ENCODE measurements at regions of chr11 and their contacts with region 1.

Region 1: DNA sequence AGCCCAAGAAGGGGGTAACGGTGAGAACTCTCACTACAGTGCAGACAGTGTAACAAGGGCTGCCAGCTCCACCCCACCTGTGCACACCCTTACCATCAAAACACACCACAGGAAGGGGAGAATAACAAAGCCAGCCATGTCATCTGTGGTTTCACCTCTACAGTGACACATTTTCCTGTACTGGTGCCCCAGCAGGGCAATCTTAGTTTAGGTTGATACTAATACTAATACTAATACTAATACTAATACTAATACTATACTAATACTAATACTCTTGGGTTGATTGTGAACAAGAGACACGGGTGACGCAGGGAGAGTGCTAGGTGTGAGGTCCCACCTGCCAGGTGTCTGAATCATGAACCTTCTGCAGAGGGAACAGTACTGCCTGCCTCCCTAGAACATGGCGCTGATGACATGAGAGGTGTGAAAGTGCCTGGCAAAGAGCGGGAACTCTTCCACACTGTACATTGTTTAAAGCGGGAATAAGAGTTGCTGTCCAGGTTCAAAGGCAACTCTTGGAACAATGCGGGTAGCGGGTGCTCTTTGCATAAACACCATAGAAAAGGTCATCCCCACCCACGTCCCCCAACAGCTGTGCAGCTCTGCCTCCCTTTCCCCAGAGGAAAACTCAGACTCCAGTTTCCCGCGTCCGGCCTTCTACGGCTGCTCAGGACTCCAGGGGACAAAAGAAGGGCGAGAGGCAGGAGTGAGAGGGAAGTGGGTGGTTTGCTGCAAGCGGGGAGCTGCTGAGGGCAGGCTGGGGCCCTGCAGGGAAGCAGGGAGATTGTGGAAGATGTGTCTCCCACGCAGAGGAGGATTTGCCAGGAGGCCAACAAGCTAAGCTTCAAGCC is 25.0 kb upstream of the TMPRSS4 start:
- DNase-seq: peak; percentile 86 to 91 (median 89)
- H3K4me3 ChIP-seq: peak overlapping the region in 1 of 2 donors; percentile 33
- H3K4me3 Mint-ChIP-seq: peak overlapping the region in 7 of 8 donors; percentile 69 to 93 (median 80)
- H3K27ac ChIP-seq: peak overlapping the region; percentile 57
- H3K27ac Mint-ChIP-seq: peak overlapping the region; percentile 95 to 100 (median 99)
- H3K4me1 ChIP-seq: peaks cover 67% of the 10 kb centered on the region
- H3K4me1 Mint-ChIP-seq: peaks cover 45 to 68% (median 59%) of the 10 kb centered on the region in 4 donors
- H3K27me3 ChIP-seq: no peaks in the 10 kb centered on the region
- H3K27me3 Mint-ChIP-seq: peaks cover 0 to 2% of the 10 kb centered on the region in 2 donors

Region 2: GRCh38 chr11:117807482-117808327 is 244.1 kb before region 1 on chr11:
- CTCF ChIA-PET with region 1: interaction called, 127 read pairs
- POLR2A ChIA-PET with region 1: interaction called, 14 read pairs
- intact Hi-C with region 1: loop called (anchors 1 kb)
- DNase-seq: peak; percentile 58 to 70 (median 62)
- H3K4me3 ChIP-seq: no peak overlapping the region
- H3K4me3 Mint-ChIP-seq: no peak overlapping the region
- H3K27ac ChIP-seq: no peak overlapping the region
- H3K27ac Mint-ChIP-seq: peak overlapping the region in 1 of 7 donors; percentile 45
- H3K4me1 ChIP-seq: peaks cover 10% of the 10 kb centered on the region
- H3K4me1 Mint-ChIP-seq: peaks cover 7 to 17% (median 10%) of the 10 kb centered on the region in 4 donors
- H3K27me3 ChIP-seq: no peaks in the 10 kb centered on the region
- H3K27me3 Mint-ChIP-seq: peaks cover 0 to 3% of the 10 kb centered on the region in 2 donors

Region 3: DNA sequence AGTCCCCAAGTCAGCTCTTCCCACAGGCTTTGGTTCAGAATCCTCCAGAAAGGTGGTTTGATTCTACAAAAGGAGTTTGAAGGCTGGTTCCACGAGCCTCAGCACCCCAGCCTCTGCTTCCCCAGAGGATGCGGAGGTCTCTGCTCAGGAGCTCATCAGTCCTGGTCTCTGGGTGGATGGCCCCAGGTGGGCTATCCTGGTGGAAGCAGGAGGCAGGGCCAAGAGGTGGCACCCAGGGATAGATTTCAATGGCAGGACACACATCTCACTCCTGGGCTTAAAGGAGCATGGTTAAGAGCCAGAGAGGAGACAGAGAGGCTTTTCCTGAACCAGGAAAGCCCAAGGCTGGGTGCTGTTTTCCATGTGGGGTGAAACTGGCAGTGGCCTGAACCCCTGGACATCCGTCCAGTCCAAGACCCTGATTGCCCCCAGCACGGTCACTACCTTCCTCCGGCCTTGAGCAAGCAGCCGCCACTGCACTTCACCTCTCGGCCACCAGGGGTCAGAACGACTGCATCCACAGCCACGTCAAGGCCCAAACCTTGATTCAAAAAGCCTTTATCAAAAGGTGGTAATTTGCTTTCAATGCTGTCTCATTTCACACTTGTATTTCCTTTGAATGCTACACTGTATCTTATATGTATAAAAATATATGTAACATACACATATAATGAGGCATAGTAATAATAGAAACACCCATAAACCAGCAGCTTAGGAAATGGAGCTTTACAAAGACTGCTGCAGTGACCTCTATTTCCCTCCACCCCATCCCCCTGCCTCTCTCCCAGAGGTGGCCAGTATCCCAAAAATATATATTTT is 208.0 kb before region 1 on chr11:
- CTCF ChIA-PET with region 1: interaction called, 286 read pairs
- POLR2A ChIA-PET with region 1: interaction called, 23 read pairs
- intact Hi-C with region 1: loop called (anchors 1 kb)
- DNase-seq: peak; percentile 72 to 79 (median 76)
- H3K4me3 ChIP-seq: no peak overlapping the region
- H3K4me3 Mint-ChIP-seq: no peak overlapping the region
- H3K27ac ChIP-seq: no peak overlapping the region
- H3K27ac Mint-ChIP-seq: peak overlapping the region in 2 of 7 donors; percentile 56 to 79
- H3K4me1 ChIP-seq: peaks cover 4% of the 10 kb centered on the region
- H3K4me1 Mint-ChIP-seq: peaks cover 0 to 8% (median 2%) of the 10 kb centered on the region in 4 donors
- H3K27me3 ChIP-seq: no peaks in the 10 kb centered on the region
- H3K27me3 Mint-ChIP-seq: no peaks in the 10 kb centered on the region

Region 4: GRCh38 chr11:117970400-117971024 is 81.3 kb before region 1 on chr11:
- CTCF ChIA-PET with region 1: interaction called, 23 read pairs
- POLR2A ChIA-PET with region 1: interaction called, 11 read pairs
- intact Hi-C with region 1: no loop called
- DNase-seq: peak; percentile 33 to 75 (median 43)
- H3K4me3 ChIP-seq: peak overlapping the region; percentile 17 to 21
- H3K4me3 Mint-ChIP-seq: peak overlapping the region in 7 of 8 donors; percentile 59 to 89 (median 76)
- H3K27ac ChIP-seq: peak overlapping the region; percentile 27
- H3K27ac Mint-ChIP-seq: peak overlapping the region; percentile 76 to 91 (median 87)
- H3K4me1 ChIP-seq: peaks cover 66% of the 10 kb centered on the region
- H3K4me1 Mint-ChIP-seq: peaks cover 49 to 69% (median 62%) of the 10 kb centered on the region in 4 donors
- H3K27me3 ChIP-seq: no peaks in the 10 kb centered on the region
- H3K27me3 Mint-ChIP-seq: no peaks in the 10 kb centered on the region

Region 5: GRCh38 chr11:118002541-118003423 is 49.1 kb before region 1 on chr11:
- CTCF ChIA-PET with region 1: interaction called, 211 read pairs
- POLR2A ChIA-PET with region 1: interaction called, 1,775 read pairs
- intact Hi-C with region 1: loop called (anchors 1 kb)
- DNase-seq: peak; percentile 26 to 68 (median 32)
- H3K4me3 ChIP-seq: peak overlapping the region; percentile 5 to 14
- H3K4me3 Mint-ChIP-seq: peak overlapping the region; percentile 56 to 82 (median 70)
- H3K27ac ChIP-seq: peak overlapping the region; percentile 53
- H3K27ac Mint-ChIP-seq: peak overlapping the region; percentile 86 to 96 (median 91)
- H3K4me1 ChIP-seq: peaks cover 100% of the 10 kb centered on the region
- H3K4me1 Mint-ChIP-seq: peaks cover 76 to 100% (median 95%) of the 10 kb centered on the region in 4 donors
- H3K27me3 ChIP-seq: no peaks in the 10 kb centered on the region
- H3K27me3 Mint-ChIP-seq: no peaks in the 10 kb centered on the region

Region 6: GRCh38 chr11:118098996-118099837 is 47.4 kb after region 1 on chr11:
- CTCF ChIA-PET with region 1: no interaction called
- POLR2A ChIA-PET with region 1: no interaction called
- intact Hi-C with region 1: no loop called
- DNase-seq: no peak
- H3K4me3 ChIP-seq: no peak overlapping the region
- H3K4me3 Mint-ChIP-seq: no peak overlapping the region
- H3K27ac ChIP-seq: no peak overlapping the region
- H3K27ac Mint-ChIP-seq: peak overlapping the region in 1 of 7 donors; percentile 91
- H3K4me1 ChIP-seq: no peaks in the 10 kb centered on the region
- H3K4me1 Mint-ChIP-seq: no peaks in the 10 kb centered on the region
- H3K27me3 ChIP-seq: no peaks in the 10 kb centered on the region
- H3K27me3 Mint-ChIP-seq: peaks cover 2 to 5% of the 10 kb centered on the region in 2 donors

Region 7: DNA sequence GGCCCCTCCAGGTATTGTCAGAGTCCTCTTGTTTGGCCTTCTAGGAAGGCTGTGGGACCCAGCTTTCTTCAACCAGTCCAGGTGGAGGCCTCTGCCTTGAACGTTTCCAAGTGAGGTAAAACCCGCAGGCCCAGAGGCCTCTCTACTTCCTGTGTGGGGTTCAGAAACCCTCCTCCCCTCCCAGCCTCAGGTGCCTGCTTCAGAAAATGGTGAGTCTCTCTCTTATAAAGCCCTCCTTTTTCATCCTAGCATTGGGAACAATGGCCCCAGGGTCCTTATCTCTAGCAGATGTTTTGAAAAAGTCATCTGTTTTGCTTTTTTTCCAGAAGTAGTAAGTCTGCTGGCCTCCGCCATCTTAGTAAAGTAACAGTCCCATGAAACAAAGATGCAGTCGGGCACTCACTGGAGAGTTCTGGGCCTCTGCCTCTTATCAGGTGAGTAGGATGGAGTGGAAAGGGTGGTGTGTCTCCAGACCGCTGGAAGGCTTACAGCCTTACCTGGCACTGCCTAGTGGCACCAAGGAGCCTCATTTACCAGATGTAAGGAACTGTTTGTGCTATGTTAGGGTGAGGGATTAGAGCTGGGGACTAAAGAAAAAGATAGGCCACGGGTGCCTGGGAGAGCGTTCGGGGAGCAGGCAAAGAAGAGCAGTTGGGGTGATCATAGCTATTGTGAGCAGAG is 252.9 kb after region 1 on chr11 and contains the start of gene CD3E:
- CTCF ChIA-PET with region 1: no interaction called
- POLR2A ChIA-PET with region 1: no interaction called
- intact Hi-C with region 1: no loop called
- DNase-seq: peak; percentile 76 to 83 (median 79)
- H3K4me3 ChIP-seq: peak within 1 kb of the TSS; percentile 96 to 97
- H3K4me3 Mint-ChIP-seq: peak within 1 kb of the TSS; percentile 99 to 100 (median 100)
- H3K27ac ChIP-seq: peak within 1 kb of the TSS; percentile 91
- H3K27ac Mint-ChIP-seq: peak within 1 kb of the TSS; percentile 98 to 100 (median 99)
- H3K4me1 ChIP-seq: peaks cover 68% of the 10 kb centered on the region
- H3K4me1 Mint-ChIP-seq: peaks cover 46 to 94% (median 66%) of the 10 kb centered on the region in 4 donors
- H3K27me3 ChIP-seq: no peaks in the 10 kb centered on the region
- H3K27me3 Mint-ChIP-seq: no peaks in the 10 kb centered on the region
- total RNA-seq, gene CD3E: 581 to 618 TPM